Tibial artery (tissue), 4 donors: ENCODE measurements at regions of chr10 and their contacts with region 1.

Region 1: GRCh38 chr10:125060826-125061556 is 99.4 kb downstream of the CTBP2 start:
- DNase-seq: peak; percentile 91 to 96
- H3K4me3 ChIP-seq: peak overlapping the region; percentile 19 to 43
- H3K27ac ChIP-seq: peak overlapping the region; percentile 92 to 94
- H3K4me1 ChIP-seq: peaks cover 17 to 99% (median 96%) of the 10 kb centered on the region in 4 donors
- H3K27me3 ChIP-seq: no peaks in the 10 kb centered on the region
- CTCF ChIP-seq: peak; percentile 88 to 93

Region 2: GRCh38 chr10:125000366-125001312 is 60.4 kb before region 1 on chr10:
- intact Hi-C with region 1: loop called (anchors 5 kb)
- DNase-seq: peak; percentile 41 to 81
- H3K4me3 ChIP-seq: peak overlapping the region; percentile 45 to 49
- H3K27ac ChIP-seq: peak overlapping the region; percentile 95
- H3K4me1 ChIP-seq: peaks cover 0 to 78% (median 65%) of the 10 kb centered on the region in 4 donors
- H3K27me3 ChIP-seq: no peaks in the 10 kb centered on the region
- CTCF ChIP-seq: peak; percentile 16 to 22

Region 3: DNA sequence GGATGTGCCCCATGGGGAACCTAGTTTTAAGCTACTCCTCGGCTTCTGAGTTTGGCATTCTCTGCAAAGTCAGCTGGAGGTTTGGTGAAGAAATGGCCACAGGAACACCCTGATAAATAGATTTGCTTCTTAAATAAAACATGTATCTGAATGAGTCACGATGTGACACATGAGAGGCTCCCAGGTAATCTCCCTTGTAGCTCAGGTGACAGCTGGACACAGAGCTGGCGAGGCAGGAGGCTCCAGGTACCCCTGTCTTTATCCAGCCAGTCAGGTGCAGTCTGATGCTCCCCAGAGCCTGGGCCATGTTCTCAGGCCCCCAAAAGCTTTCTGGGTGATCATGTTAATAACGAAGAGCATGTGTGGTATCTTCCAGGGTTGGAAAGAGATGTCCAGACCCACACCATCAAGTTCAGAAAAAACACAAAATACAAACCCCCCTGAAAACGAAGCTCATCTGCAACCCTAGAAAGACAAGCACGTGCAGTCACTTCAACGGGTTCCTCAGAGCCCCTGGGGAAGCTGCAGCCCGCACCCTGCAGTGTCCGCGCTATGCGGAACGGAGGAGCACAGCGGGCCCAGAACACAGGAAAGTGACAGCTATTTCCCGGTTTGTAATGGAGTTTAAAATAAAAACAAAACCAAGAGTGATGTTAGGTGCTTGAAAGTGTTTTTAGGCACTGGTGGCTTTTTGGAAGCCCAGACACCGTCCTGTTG is 49.7 kb before region 1 on chr10:
- intact Hi-C with region 1: no loop called
- DNase-seq: no peak
- H3K4me3 ChIP-seq: peak overlapping the region in 1 of 2 donors; percentile 26
- H3K27ac ChIP-seq: peak overlapping the region; percentile 85 to 90
- H3K4me1 ChIP-seq: peaks cover 0 to 100% (median 85%) of the 10 kb centered on the region in 4 donors
- H3K27me3 ChIP-seq: no peaks in the 10 kb centered on the region
- CTCF ChIP-seq: no peak

Region 4: GRCh38 chr10:125389648-125390047 is 328.7 kb after region 1 on chr10:
- intact Hi-C with region 1: no loop called
- DNase-seq: no peak
- H3K4me3 ChIP-seq: no peak overlapping the region
- H3K27ac ChIP-seq: no peak overlapping the region
- H3K4me1 ChIP-seq: no peaks in the 10 kb centered on the region
- H3K27me3 ChIP-seq: peaks cover 0 to 8% of the 10 kb centered on the region in 2 donors
- CTCF ChIP-seq: no peak